CD8-positive, alpha-beta T cell (primary cell): ENCODE measurements at regions of chr16 and their contacts with region 1.

Region 1: DNA sequence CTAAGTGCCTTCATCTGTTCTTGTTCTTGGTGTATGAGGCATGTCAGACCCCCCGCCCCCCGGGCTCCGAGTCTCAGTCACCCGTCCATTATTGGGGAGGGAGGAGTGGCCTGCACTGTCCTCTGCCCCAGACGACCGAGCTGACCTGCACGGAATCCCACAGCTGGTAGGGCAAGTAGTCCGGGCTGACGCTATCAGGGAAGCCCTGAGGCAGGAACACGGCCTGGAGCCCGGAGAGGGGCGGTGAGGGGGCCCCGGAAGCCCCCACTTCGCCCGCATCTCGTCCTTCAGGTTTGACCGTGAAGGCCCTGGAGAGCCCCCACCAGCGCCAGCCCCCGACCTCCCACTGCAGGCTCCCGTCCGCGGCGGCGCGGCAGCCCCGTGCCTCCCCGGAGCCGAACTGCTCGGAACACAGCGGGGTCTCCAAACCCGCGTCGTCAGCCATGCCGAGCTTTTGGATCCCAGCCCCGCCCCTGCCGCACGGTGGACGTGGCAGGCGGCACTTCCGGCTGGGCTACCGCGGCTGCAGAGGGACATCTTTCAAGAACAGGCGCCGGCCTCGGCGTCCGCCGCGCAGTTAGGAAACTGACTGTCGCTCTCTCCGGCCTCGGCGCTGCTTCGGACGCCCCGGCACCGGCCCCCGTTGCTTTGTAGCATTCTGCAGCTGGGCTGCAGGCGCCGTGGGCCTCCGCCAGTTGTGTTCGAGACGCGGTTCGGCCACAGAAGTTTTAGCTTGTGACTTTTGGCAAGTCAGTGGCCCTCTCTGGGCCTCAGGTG is at the start of gene RUSF1:
- DNase-seq: peak; percentile 57 to 90 (median 83)
- ATAC-seq: peak; percentile 88
- H3K4me3 ChIP-seq: peak within 1 kb of the TSS; percentile 80 to 94
- H3K4me3 Mint-ChIP-seq: peak within 1 kb of the TSS; percentile 86
- H3K27ac ChIP-seq: peak within 1 kb of the TSS; percentile 84 to 89
- H3K27ac Mint-ChIP-seq: peak within 1 kb of the TSS; percentile 96
- H3K4me1 ChIP-seq: peaks cover 34% of the 10 kb centered on the region
- H3K4me1 Mint-ChIP-seq: peaks cover 45% of the 10 kb centered on the region
- H3K27me3 ChIP-seq: no peaks in the 10 kb centered on the region
- H3K27me3 Mint-ChIP-seq: no peaks in the 10 kb centered on the region
- CTCF ChIP-seq: no peak
- total RNA-seq, gene RUSF1: 62.8 to 67.8 TPM

Region 2: GRCh38 chr16:31472709-31473203 is 35.4 kb before region 1 on chr16:
- CTCF ChIA-PET with region 1: no interaction called
- POLR2A ChIA-PET with region 1: interaction called, 12 read pairs
- intact Hi-C with region 1: loop called in 1 of 2 experiments (anchors 2 kb)
- DNase-seq: peak in 4 of 9 experiments; percentile 52 to 58 (median 55)
- ATAC-seq: peak; percentile 37
- H3K4me3 ChIP-seq: no peak overlapping the region
- H3K4me3 Mint-ChIP-seq: peak overlapping the region; percentile 77
- H3K27ac ChIP-seq: no peak overlapping the region
- H3K27ac Mint-ChIP-seq: no peak overlapping the region
- H3K4me1 ChIP-seq: peaks cover 18% of the 10 kb centered on the region
- H3K4me1 Mint-ChIP-seq: peaks cover 19% of the 10 kb centered on the region
- H3K27me3 ChIP-seq: peaks cover 4 to 9% of the 10 kb centered on the region in 2 experiments
- H3K27me3 Mint-ChIP-seq: peaks cover 19% of the 10 kb centered on the region
- CTCF ChIP-seq: no peak

Region 3: GRCh38 chr16:31487720-31488467 is 20.2 kb before region 1 on chr16:
- CTCF ChIA-PET with region 1: interaction called, 3 read pairs
- POLR2A ChIA-PET with region 1: interaction called, 23 read pairs
- intact Hi-C with region 1: loop called (anchors 2 kb)
- DNase-seq: peak; percentile 46 to 90 (median 78)
- ATAC-seq: peak; percentile 90
- H3K4me3 ChIP-seq: peak overlapping the region; percentile 71 to 86
- H3K4me3 Mint-ChIP-seq: peak overlapping the region; percentile 90
- H3K27ac ChIP-seq: peak overlapping the region; percentile 38 to 58
- H3K27ac Mint-ChIP-seq: peak overlapping the region; percentile 88
- H3K4me1 ChIP-seq: peaks cover 16% of the 10 kb centered on the region
- H3K4me1 Mint-ChIP-seq: peaks cover 11% of the 10 kb centered on the region
- H3K27me3 ChIP-seq: no peaks in the 10 kb centered on the region
- H3K27me3 Mint-ChIP-seq: no peaks in the 10 kb centered on the region
- CTCF ChIP-seq: no peak

Region 4: GRCh38 chr16:31695667-31696066 is 187.6 kb after region 1 on chr16:
- CTCF ChIA-PET with region 1: interaction called, 3 read pairs
- POLR2A ChIA-PET with region 1: interaction called, 5 read pairs
- intact Hi-C with region 1: loop called (anchors 2 to 5 kb)
- DNase-seq: peak in 8 of 9 experiments; percentile 25 to 91 (median 60)
- ATAC-seq: peak; percentile 84
- H3K4me3 ChIP-seq: no peak overlapping the region
- H3K4me3 Mint-ChIP-seq: no peak overlapping the region
- H3K27ac ChIP-seq: peak overlapping the region; percentile 36 to 64
- H3K27ac Mint-ChIP-seq: no peak overlapping the region
- H3K4me1 ChIP-seq: peaks cover 23% of the 10 kb centered on the region
- H3K4me1 Mint-ChIP-seq: peaks cover 10% of the 10 kb centered on the region
- H3K27me3 ChIP-seq: no peaks in the 10 kb centered on the region
- H3K27me3 Mint-ChIP-seq: no peaks in the 10 kb centered on the region
- CTCF ChIP-seq: no peak

Region 5: DNA sequence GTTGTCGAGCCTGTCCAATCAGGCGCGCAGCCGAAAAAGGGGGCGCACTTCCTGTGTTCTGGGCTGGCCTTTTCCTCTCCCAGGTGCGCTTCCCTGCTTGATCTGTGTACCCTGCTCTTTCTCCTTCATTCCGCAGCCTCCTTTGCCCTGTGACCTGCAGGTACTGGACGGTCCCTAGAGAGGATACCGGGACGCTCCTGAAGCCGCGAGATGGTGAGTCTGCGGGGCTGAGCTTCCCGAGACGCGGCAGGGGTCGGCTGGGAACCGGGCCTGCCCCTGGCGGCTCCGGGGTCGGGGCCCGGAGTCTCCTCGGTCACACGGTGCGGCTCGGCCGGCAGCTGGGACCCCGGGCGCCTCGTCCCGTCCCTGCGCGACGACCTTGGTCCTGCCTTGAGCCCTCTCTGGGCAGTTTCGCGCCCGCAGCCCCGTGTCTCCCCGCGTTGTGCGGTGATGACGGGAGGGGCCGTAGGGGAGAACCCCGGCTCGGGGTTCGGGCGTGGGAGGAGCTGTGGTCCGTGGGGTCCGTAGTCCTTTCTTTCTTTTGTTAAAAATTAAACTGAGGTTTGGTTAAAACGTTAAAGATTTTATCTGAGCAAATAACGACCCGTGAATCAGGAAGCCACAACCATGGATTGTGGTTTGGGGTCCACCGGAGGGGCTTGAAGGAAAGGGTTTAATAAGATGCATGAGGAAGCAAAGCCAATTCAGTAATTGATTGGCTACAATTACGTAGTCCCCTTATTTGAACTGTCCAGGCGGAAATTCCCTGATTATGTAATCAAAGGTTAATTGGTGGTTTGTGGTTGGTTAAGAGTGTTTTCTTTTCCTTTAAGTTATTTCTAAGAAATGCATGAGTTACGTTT is 192.6 kb after region 1 on chr16:
- CTCF ChIA-PET with region 1: interaction called, 3 read pairs
- POLR2A ChIA-PET with region 1: interaction called, 5 read pairs
- intact Hi-C with region 1: loop called (anchors 2 to 5 kb)
- DNase-seq: peak; percentile 79 to 94 (median 90)
- ATAC-seq: peak; percentile 86
- H3K4me3 ChIP-seq: peak overlapping the region; percentile 76 to 94
- H3K4me3 Mint-ChIP-seq: peak overlapping the region; percentile 95
- H3K27ac ChIP-seq: peak overlapping the region; percentile 90 to 91
- H3K27ac Mint-ChIP-seq: peak overlapping the region; percentile 97
- H3K4me1 ChIP-seq: peaks cover 28% of the 10 kb centered on the region
- H3K4me1 Mint-ChIP-seq: peaks cover 31% of the 10 kb centered on the region
- H3K27me3 ChIP-seq: no peaks in the 10 kb centered on the region
- H3K27me3 Mint-ChIP-seq: no peaks in the 10 kb centered on the region
- CTCF ChIP-seq: no peak

Region 6: GRCh38 chr16:31713071-31713944 is 205.2 kb after region 1 on chr16:
- CTCF ChIA-PET with region 1: no interaction called
- POLR2A ChIA-PET with region 1: interaction called, 5 read pairs
- intact Hi-C with region 1: loop called in 1 of 2 experiments (anchors 5 kb)
- DNase-seq: peak; percentile 84 to 94 (median 92)
- ATAC-seq: peak; percentile 94
- H3K4me3 ChIP-seq: peak overlapping the region; percentile 84 to 100
- H3K4me3 Mint-ChIP-seq: peak overlapping the region; percentile 98
- H3K27ac ChIP-seq: peak overlapping the region; percentile 83 to 98
- H3K27ac Mint-ChIP-seq: peak overlapping the region; percentile 97
- H3K4me1 ChIP-seq: peaks cover 50% of the 10 kb centered on the region
- H3K4me1 Mint-ChIP-seq: peaks cover 68% of the 10 kb centered on the region
- H3K27me3 ChIP-seq: no peaks in the 10 kb centered on the region
- H3K27me3 Mint-ChIP-seq: no peaks in the 10 kb centered on the region
- CTCF ChIP-seq: no peak